Heart right ventricle (tissue), 16 donors: ENCODE measurements at regions of chr13 and their contacts with region 1.

Region 1: GRCh38 chr13:108269601-108270328 is at the start of gene TNFSF13B:
- DNase-seq: peak; percentile 11 to 35
- ATAC-seq: peak in 7 of 8 donors; percentile 67 to 78 (median 73)
- H3K4me3 ChIP-seq: peak within 1 kb of the TSS in 9 of 10 donors; percentile 23 to 64 (median 50)
- H3K27ac ChIP-seq: peak within 1 kb of the TSS in 9 of 10 donors; percentile 42 to 95 (median 70)
- H3K4me1 ChIP-seq: peaks cover 0 to 67% (median 14%) of the 10 kb centered on the region in 9 donors
- H3K27me3 ChIP-seq: no peaks in the 10 kb centered on the region
- CTCF ChIP-seq: peak in 2 of 9 donors; percentile 6 to 7
- total RNA-seq, gene TNFSF13B: 0.83 to 20.8 (median 2.0) TPM

Region 2: GRCh38 chr13:108227651-108228272 is 42.0 kb before region 1 on chr13:
- intact Hi-C with region 1: loop called in 1 of 10 experiments (anchors 10 kb)
- DNase-seq: peak in 1 of 2 donors; percentile 24
- ATAC-seq: no peak
- H3K4me3 ChIP-seq: no peak overlapping the region
- H3K27ac ChIP-seq: no peak overlapping the region
- H3K4me1 ChIP-seq: peaks cover 4 to 54% (median 38%) of the 10 kb centered on the region in 9 donors
- H3K27me3 ChIP-seq: no peaks in the 10 kb centered on the region
- CTCF ChIP-seq: peak; percentile 73 to 87 (median 81)

Region 3: GRCh38 chr13:108289819-108290218 is 20.1 kb after region 1 on chr13:
- intact Hi-C with region 1: no loop called
- DNase-seq: no peak
- ATAC-seq: no peak
- H3K4me3 ChIP-seq: no peak overlapping the region
- H3K27ac ChIP-seq: no peak overlapping the region
- H3K4me1 ChIP-seq: no peaks in the 10 kb centered on the region
- H3K27me3 ChIP-seq: no peaks in the 10 kb centered on the region
- CTCF ChIP-seq: no peak